ENCODE measurements at regions of chr16 and their contacts with region 1.

Region 1: GRCh38 chr16:81798311-81799137 is 19.4 kb downstream of the PLCG2 start:
- DNase-seq: peak; percentile 70
- H3K4me3 Mint-ChIP-seq: peak overlapping the region; percentile 63
- H3K27ac Mint-ChIP-seq: peak overlapping the region; percentile 88
- H3K4me1 Mint-ChIP-seq: peaks cover 29% of the 10 kb centered on the region
- H3K27me3 Mint-ChIP-seq: no peaks in the 10 kb centered on the region

Region 2: GRCh38 chr16:81401035-81401950 is 397.2 kb before region 1 on chr16:
- intact Hi-C with region 1: no loop called
- DNase-seq: no peak
- H3K4me3 Mint-ChIP-seq: no peak overlapping the region
- H3K27ac Mint-ChIP-seq: no peak overlapping the region
- H3K4me1 Mint-ChIP-seq: peaks cover 2% of the 10 kb centered on the region
- H3K27me3 Mint-ChIP-seq: no peaks in the 10 kb centered on the region

Region 3: DNA sequence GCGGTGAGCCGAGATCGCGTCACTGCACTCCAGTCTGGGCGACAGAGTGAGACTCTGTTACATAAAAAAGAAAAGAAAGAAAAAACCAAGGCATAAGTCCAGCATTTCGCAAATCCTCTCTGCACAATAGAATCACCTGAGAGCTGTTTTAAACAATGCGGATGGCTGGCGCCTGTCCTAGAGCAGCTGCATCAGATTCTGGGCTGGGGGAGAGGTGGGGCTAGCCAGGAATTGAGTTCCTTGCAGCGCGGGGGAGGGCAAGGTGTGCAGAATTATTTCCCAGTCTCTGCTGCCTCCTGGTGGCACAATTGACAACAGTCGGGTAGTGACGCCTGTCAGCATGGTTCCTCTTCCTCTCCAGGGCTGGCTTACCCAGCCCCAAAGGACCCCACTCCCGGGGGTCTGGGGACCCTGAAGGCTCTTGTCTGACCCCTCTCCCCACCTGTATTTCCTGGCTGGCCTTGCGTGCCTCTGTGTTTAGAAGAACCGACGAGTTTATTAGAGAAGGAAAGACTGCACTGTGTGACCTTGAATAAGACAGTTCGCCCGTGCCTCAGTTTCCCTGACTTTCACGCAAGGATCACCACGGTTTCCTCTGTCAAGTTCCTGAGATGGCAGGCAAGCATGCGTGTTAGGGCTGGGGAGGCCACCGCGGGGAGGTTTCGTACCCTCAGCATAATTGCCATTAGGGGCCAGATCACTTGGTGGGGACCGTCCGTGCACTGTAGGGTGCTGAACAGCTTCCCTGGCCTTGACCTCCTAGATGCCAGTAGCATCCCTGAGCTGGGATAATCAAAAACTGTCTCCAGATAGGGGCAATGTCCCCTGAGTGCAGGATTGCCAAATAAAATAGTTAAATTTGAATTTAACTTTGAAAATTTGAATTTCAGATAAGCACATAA is 60.4 kb before region 1 on chr16:
- intact Hi-C with region 1: no loop called
- DNase-seq: peak; percentile 96
- H3K4me3 Mint-ChIP-seq: peak overlapping the region; percentile 71
- H3K27ac Mint-ChIP-seq: peak overlapping the region; percentile 35
- H3K4me1 Mint-ChIP-seq: peaks cover 12% of the 10 kb centered on the region
- H3K27me3 Mint-ChIP-seq: peaks cover 2% of the 10 kb centered on the region

Region 4: GRCh38 chr16:81755915-81756614 is 42.5 kb before region 1 on chr16:
- intact Hi-C with region 1: loop called (anchors 5 kb)
- DNase-seq: no peak
- H3K4me3 Mint-ChIP-seq: no peak overlapping the region
- H3K27ac Mint-ChIP-seq: no peak overlapping the region
- H3K4me1 Mint-ChIP-seq: peaks cover 29% of the 10 kb centered on the region
- H3K27me3 Mint-ChIP-seq: no peaks in the 10 kb centered on the region

Region 5: GRCh38 chr16:81823111-81823510 is 24.6 kb after region 1 on chr16:
- intact Hi-C with region 1: no loop called
- DNase-seq: no peak
- H3K4me3 Mint-ChIP-seq: no peak overlapping the region
- H3K27ac Mint-ChIP-seq: no peak overlapping the region
- H3K4me1 Mint-ChIP-seq: peaks cover 5% of the 10 kb centered on the region
- H3K27me3 Mint-ChIP-seq: peaks cover 2% of the 10 kb centered on the region

Measured in activated CD4-positive, alpha-beta T cell treated with anti-CD3 and anti-CD28 coated beads, Interleukin-2, amount 10 ng/mL, durations not matched to agents 24 days and 14 days (primary cell).